OCI-LY7 (cell line): ENCODE measurements at regions of chr6 and their contacts with region 1.

Region 1: GRCh38 chr6:31739639-31740396 is at the start of gene MSH5:
- DNase-seq: peak; percentile 100
- H3K4me3 ChIP-seq: peak within 1 kb of the TSS; percentile 79
- H3K27ac ChIP-seq: peak within 1 kb of the TSS; percentile 93
- H3K4me1 ChIP-seq: peaks cover 50% of the 10 kb centered on the region
- CTCF ChIP-seq: no peak
- total RNA-seq, gene MSH5: 104 and 108 TPM in 2 replicates

Region 2: DNA sequence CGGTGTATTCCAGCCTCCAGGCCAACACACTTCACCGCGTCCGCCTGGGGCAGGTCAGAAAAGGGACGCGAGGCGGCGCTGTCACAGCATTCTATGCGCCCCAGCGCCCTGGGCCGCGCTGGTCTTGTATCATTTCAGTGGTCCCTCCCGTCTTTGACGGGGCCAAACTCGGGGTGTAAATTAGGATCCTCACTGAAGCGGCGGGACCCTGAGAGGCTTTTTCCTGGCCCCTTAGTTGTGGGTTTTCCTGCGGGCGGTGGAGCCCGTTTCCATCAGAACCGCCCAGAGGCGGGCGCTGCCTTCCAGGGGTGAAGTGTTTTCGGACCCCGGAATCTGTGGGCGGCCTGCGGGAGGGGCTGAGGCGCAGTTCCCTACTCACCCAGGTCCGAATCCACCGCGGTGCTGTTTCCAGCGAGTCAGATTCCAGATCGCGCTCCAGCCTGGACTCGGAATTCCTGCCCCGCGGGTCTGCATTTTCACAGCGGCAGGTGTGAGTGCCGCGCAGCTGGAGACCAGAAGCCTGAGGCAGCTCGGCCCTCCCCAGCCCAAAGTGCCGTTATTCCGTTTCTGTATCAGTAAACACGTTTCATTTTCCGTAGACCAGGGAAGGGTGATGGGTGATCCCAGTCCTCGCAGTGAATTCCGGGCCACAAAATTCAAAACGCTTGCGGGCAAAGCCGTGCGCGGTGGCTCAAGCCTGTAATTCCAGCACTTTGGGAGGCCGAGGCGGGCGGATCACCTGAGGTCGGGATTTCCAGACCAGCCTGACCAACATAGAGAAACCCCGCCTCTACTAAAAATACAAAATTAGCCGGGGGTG is 245.7 kb before region 1 on chr6:
- CTCF ChIA-PET with region 1: no interaction called
- POLR2A ChIA-PET with region 1: no interaction called
- intact Hi-C with region 1: loop called (anchors 2 kb)
- DNase-seq: peak; percentile 88
- H3K4me3 ChIP-seq: peak overlapping the region; percentile 82
- H3K27ac ChIP-seq: peak overlapping the region; percentile 78
- H3K4me1 ChIP-seq: peaks cover 35% of the 10 kb centered on the region
- CTCF ChIP-seq: peak; percentile 95

Region 3: DNA sequence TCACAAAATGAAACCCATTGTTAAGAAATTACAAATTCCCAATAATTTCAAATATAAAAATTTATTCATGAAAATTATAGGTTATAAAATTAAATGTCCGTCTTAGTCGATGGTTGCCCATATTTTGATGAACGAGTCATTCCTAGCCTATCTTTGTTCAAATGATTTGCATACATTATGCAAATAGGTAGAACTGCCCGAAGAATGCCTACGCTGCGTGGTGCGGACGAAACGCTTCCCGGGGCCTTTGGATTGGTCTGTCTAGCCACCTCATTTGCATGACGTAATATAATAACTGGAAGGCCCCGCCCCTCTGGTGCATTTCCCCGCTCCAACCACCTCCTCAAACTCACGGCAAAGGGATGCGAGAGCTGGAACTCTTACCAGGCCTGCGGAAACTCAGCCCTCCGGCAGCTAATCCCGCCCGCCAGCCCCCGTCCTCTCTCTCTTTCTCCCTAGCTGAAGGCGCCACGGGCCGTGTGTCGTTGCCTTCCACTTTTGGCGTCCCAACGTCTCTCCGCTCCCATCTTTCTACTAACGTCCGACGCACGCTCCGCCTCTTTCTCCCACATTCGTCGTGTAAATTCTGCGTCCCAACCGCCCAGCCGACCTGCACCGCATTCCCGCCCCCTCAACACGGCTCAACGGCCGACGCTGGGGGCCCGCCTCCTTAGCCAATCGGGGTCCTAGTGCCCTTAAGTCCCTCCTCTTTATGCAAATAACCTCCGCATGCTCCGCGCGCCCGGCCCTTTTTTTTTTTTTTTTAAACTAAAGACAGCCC is 119.8 kb before region 1 on chr6:
- CTCF ChIA-PET with region 1: no interaction called
- POLR2A ChIA-PET with region 1: interaction called, 3 read pairs
- intact Hi-C with region 1: loop called (anchors 1 kb)
- DNase-seq: peak; percentile 99
- H3K4me3 ChIP-seq: peak overlapping the region; percentile 83
- H3K27ac ChIP-seq: peak overlapping the region; percentile 94
- H3K4me1 ChIP-seq: peaks cover 42% of the 10 kb centered on the region
- CTCF ChIP-seq: no peak

Region 4: GRCh38 chr6:31680840-31681671 is 58.8 kb before region 1 on chr6 and contains the start of gene LY6G5C:
- CTCF ChIA-PET with region 1: interaction called, 3 read pairs
- POLR2A ChIA-PET with region 1: interaction called, 4 read pairs
- intact Hi-C with region 1: loop called (anchors 1 kb)
- DNase-seq: peak; percentile 74
- H3K4me3 ChIP-seq: peak within 1 kb of the TSS; percentile 18
- H3K27ac ChIP-seq: no peak within 1 kb of the TSS
- H3K4me1 ChIP-seq: peaks cover 30% of the 10 kb centered on the region
- CTCF ChIP-seq: no peak; the same call in 1 of the 2 replicates
- total RNA-seq, gene LY6G5C: 1.6 and 1.8 TPM in 2 replicates

Region 5: GRCh38 chr6:31729515-31729978 is 10.3 kb before region 1 on chr6:
- CTCF ChIA-PET with region 1: interaction called, 5 read pairs
- POLR2A ChIA-PET with region 1: interaction called, 19 read pairs
- intact Hi-C with region 1: loop called (anchors 1 kb)
- DNase-seq: peak; percentile 85
- H3K4me3 ChIP-seq: peak overlapping the region; percentile 66
- H3K27ac ChIP-seq: peak overlapping the region; percentile 2
- H3K4me1 ChIP-seq: peaks cover 54% of the 10 kb centered on the region
- CTCF ChIP-seq: 0 out of 2 replicates have a peak, but pooled peaks have one; percentile 25

Region 6: DNA sequence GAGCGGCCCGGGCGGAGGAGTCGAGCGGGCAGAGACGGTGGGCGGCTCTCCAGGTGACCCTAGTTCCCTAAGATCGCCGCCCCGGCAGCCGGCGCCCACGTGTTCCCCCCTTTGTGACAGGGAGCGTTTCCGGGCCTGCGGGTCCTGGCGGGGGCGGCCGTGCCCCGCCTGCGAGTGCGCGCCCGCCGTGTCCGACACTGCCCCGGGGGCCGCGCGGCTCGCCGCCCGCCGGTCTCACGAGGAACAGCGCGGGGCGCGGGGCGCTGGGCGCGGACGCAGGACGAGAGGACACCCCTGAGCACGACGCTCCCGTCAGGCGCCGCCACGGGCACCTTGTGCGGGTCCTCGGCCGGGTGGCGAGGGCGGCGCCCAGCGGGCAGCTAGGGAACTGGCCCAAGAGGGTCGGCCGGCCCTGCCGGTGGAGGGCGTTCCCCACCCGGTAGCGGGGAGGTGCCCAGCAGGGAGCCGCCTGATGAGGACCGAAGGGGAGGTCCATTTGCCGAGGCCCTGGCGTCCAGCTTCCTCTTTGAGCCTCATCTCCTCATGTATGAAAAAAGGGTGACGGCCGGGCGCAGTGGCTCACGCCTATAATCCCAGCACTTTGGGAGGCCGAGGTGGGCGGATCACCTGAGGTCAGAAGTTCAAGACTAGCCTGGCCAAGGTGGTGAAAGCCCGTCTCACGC is 55.9 kb after region 1 on chr6 and contains the start of gene VARS1:
- CTCF ChIA-PET with region 1: interaction called, 3 read pairs
- POLR2A ChIA-PET with region 1: interaction called, 3 read pairs
- intact Hi-C with region 1: loop called (anchors 2 kb)
- DNase-seq: peak; percentile 92
- H3K4me3 ChIP-seq: peak within 1 kb of the TSS; percentile 90
- H3K27ac ChIP-seq: peak within 1 kb of the TSS; percentile 71
- H3K4me1 ChIP-seq: peaks cover 49% of the 10 kb centered on the region
- CTCF ChIP-seq: peak; percentile 74
- total RNA-seq, gene VARS1: 47.0 and 51.2 TPM in 2 replicates

Region 7: GRCh38 chr6:31827286-31828079 is 87.7 kb after region 1 on chr6 and contains the start of gene HSPA1B:
- CTCF ChIA-PET with region 1: interaction called, 3 read pairs
- POLR2A ChIA-PET with region 1: interaction called, 43 read pairs
- intact Hi-C with region 1: loop called (anchors 2 kb)
- DNase-seq: peak; percentile 94
- H3K4me3 ChIP-seq: peak within 1 kb of the TSS; percentile 76
- H3K27ac ChIP-seq: peak within 1 kb of the TSS; percentile 67
- H3K4me1 ChIP-seq: peaks cover 49% of the 10 kb centered on the region
- CTCF ChIP-seq: no peak
- total RNA-seq, gene HSPA1B: 160 and 177 TPM in 2 replicates

Region 8: GRCh38 chr6:31979238-31979898 is 239.6 kb after region 1 on chr6:
- CTCF ChIA-PET with region 1: no interaction called
- POLR2A ChIA-PET with region 1: no interaction called
- intact Hi-C with region 1: no loop called
- DNase-seq: no peak
- H3K4me3 ChIP-seq: no peak overlapping the region
- H3K27ac ChIP-seq: no peak overlapping the region
- H3K4me1 ChIP-seq: no peaks in the 10 kb centered on the region
- CTCF ChIP-seq: no peak